ENCODE measurements at regions of chr17 and their contacts with region 1.

Region 1: GRCh38 chr17:76264755-76265596 is at the start of gene UBALD2:
- DNase-seq: peak; percentile 100
- H3K4me3 Mint-ChIP-seq: peak within 1 kb of the TSS; percentile 92
- H3K27ac Mint-ChIP-seq: peak within 1 kb of the TSS; percentile 97
- H3K4me1 Mint-ChIP-seq: peaks cover 48% of the 10 kb centered on the region
- H3K27me3 Mint-ChIP-seq: no peaks in the 10 kb centered on the region
- total RNA-seq, gene UBALD2: 317 TPM

Region 2: GRCh38 chr17:76182016-76182764 is 82.8 kb before region 1 on chr17:
- CTCF ChIA-PET with region 1: interaction called, 15 read pairs
- POLR2A ChIA-PET with region 1: interaction called, 298 read pairs
- intact Hi-C with region 1: no loop called
- DNase-seq: peak; percentile 98
- H3K4me3 Mint-ChIP-seq: peak overlapping the region; percentile 62
- H3K27ac Mint-ChIP-seq: peak overlapping the region; percentile 87
- H3K4me1 Mint-ChIP-seq: peaks cover 56% of the 10 kb centered on the region
- H3K27me3 Mint-ChIP-seq: no peaks in the 10 kb centered on the region

Region 3: GRCh38 chr17:76199469-76199868 is 65.5 kb before region 1 on chr17:
- CTCF ChIA-PET with region 1: interaction called, 3 read pairs
- POLR2A ChIA-PET with region 1: interaction called, 12 read pairs
- intact Hi-C with region 1: no loop called
- DNase-seq: peak; percentile 83
- H3K4me3 Mint-ChIP-seq: peak overlapping the region; percentile 22
- H3K27ac Mint-ChIP-seq: peak overlapping the region; percentile 88
- H3K4me1 Mint-ChIP-seq: peaks cover 52% of the 10 kb centered on the region
- H3K27me3 Mint-ChIP-seq: no peaks in the 10 kb centered on the region

Region 4: GRCh38 chr17:76246080-76247066 is 18.6 kb before region 1 on chr17:
- CTCF ChIA-PET with region 1: interaction called, 13 read pairs
- POLR2A ChIA-PET with region 1: interaction called, 51 read pairs
- intact Hi-C with region 1: loop called (anchors 1 kb)
- DNase-seq: peak; percentile 88
- H3K4me3 Mint-ChIP-seq: peak overlapping the region; percentile 52
- H3K27ac Mint-ChIP-seq: peak overlapping the region; percentile 90
- H3K4me1 Mint-ChIP-seq: peaks cover 49% of the 10 kb centered on the region
- H3K27me3 Mint-ChIP-seq: no peaks in the 10 kb centered on the region

Region 5: DNA sequence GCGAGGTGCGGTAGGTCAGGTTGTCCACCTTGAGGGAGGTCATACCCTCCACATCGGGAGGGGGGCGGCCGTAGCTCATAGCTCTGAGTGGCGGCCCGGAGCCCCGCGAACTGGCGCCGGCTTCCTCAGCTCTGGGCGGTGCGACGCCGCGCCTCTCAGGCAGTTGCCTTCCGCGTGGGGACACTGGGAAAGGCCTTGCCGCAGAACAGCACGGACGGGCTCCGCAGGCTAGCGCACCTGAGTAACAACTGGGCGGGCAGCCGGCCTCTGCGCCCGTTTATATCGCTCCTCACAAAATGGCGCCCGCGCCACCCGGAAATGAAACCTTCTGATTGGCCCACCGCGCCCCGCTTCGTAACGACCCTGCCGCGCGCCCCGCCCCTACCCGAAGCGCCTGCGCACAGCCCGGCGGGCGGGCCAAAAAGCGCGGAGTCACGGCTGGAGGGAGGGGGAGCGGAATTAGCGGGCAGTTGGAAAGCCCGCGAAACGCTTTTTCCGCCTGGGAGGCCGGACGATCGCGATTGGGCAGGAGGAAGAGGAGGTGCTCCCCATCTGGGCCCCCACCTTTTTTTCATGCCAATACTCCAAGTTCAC is 472.2 kb after region 1 on chr17 and contains the start of gene SRSF2:
- CTCF ChIA-PET with region 1: no interaction called
- POLR2A ChIA-PET with region 1: no interaction called
- intact Hi-C with region 1: loop called (anchors 5 kb)
- DNase-seq: peak; percentile 99
- H3K4me3 Mint-ChIP-seq: peak within 1 kb of the TSS; percentile 95
- H3K27ac Mint-ChIP-seq: peak within 1 kb of the TSS; percentile 100
- H3K4me1 Mint-ChIP-seq: peaks cover 46% of the 10 kb centered on the region
- H3K27me3 Mint-ChIP-seq: no peaks in the 10 kb centered on the region
- total RNA-seq, gene SRSF2: 299 TPM

Measured in activated CD4-positive, alpha-beta memory T cell treated with anti-CD3 and anti-CD28 coated beads for 36 hours (primary cell).